Naive thymus-derived CD4-positive, alpha-beta T cell (primary cell): ENCODE measurements at regions of chr12 and their contacts with region 1.

Region 1: DNA sequence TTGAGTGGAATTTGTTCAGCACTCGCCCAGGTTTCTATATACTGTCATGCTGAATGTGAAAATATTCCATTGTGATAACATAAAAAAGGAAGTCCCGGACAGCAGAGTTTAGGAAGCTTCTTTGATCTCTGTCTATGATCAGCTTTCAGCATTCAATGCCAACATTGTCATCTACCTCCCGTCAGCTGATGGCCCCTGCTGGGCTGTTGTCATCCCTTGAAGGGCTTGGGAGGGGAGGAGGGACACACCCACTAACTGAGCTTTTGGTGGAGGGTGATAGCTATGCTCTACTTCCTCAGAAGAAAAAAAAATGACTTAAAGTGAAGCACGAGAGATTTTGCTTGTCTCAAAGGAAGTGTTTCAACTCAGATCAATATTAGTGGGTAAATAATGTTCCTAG is 4.7 kb upstream of the KRT77 start:
- DNase-seq: peak in 7 of 9 donors; percentile 26 to 66 (median 52)
- ATAC-seq: peak; percentile 49
- H3K4me3 ChIP-seq: no peak overlapping the region
- H3K4me3 Mint-ChIP-seq: peak overlapping the region in 5 of 10 donors; percentile 11 to 63 (median 50)
- H3K27ac ChIP-seq: no peak overlapping the region
- H3K27ac Mint-ChIP-seq: peak overlapping the region in 8 of 9 donors; percentile 75 to 91 (median 83)
- H3K4me1 ChIP-seq: peaks cover 0 to 23% of the 10 kb centered on the region in 2 donors
- H3K4me1 Mint-ChIP-seq: peaks cover 4 to 62% (median 40%) of the 10 kb centered on the region in 7 donors
- H3K27me3 ChIP-seq: no peaks in the 10 kb centered on the region
- H3K27me3 Mint-ChIP-seq: peaks cover 0 to 29% (median 0%) of the 10 kb centered on the region in 5 donors

Region 2: DNA sequence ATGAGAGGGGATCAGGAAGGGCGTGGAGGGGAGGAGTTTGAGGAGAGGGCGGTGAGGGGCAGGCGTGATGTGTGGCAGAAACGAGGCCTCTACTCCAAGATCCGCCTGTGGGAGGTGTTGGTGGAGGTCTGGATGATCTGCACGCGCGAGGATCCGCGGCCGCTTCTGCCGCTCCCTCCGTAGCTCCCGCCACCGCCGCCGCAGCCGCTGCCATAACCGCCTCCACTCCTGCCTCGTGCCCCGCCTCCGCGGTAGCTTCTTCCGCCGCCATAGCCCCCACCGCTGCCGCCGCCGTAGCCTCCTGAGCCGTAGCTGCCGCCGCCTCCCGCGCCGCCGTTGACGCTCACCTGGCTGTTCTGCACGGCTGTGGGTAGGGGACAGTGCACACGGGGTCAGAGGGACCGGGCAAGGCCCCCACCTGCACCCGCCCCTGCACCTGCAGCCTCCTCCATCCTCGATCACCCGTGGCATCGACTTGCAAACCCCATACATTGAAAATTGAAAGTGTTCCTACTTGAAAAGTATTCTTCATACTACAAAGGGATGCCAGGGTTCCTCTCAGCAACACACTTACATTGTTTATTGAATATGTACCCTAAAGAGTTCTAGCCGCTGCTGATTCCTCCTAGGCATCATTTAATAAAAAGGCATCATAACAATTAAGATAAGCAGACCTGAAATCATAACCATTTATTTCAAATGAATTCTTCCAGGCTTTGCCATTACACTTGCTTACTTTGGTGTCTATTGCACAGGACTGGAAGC is 16.8 kb before region 1 on chr12:
- CTCF ChIA-PET with region 1: interaction called, 5 read pairs
- POLR2A ChIA-PET with region 1: interaction called, 43 read pairs
- intact Hi-C with region 1: loop called in 1 of 2 experiments (anchors 1 kb)
- DNase-seq: peak; percentile 46 to 74 (median 71)
- ATAC-seq: peak; percentile 91
- H3K4me3 ChIP-seq: peak overlapping the region; percentile 50
- H3K4me3 Mint-ChIP-seq: peak overlapping the region; percentile 85 to 97 (median 91)
- H3K27ac ChIP-seq: peak overlapping the region; percentile 68
- H3K27ac Mint-ChIP-seq: peak overlapping the region in 8 of 9 donors; percentile 90 to 98 (median 97)
- H3K4me1 ChIP-seq: peaks cover 5 to 27% of the 10 kb centered on the region in 2 donors
- H3K4me1 Mint-ChIP-seq: peaks cover 8 to 63% (median 55%) of the 10 kb centered on the region in 7 donors
- H3K27me3 ChIP-seq: no peaks in the 10 kb centered on the region
- H3K27me3 Mint-ChIP-seq: peaks cover 0 to 79% (median 0%) of the 10 kb centered on the region in 5 donors